OCI-LY7 (cell line): ENCODE measurements at regions of chr22 and their contacts with region 1.

Region 1: DNA sequence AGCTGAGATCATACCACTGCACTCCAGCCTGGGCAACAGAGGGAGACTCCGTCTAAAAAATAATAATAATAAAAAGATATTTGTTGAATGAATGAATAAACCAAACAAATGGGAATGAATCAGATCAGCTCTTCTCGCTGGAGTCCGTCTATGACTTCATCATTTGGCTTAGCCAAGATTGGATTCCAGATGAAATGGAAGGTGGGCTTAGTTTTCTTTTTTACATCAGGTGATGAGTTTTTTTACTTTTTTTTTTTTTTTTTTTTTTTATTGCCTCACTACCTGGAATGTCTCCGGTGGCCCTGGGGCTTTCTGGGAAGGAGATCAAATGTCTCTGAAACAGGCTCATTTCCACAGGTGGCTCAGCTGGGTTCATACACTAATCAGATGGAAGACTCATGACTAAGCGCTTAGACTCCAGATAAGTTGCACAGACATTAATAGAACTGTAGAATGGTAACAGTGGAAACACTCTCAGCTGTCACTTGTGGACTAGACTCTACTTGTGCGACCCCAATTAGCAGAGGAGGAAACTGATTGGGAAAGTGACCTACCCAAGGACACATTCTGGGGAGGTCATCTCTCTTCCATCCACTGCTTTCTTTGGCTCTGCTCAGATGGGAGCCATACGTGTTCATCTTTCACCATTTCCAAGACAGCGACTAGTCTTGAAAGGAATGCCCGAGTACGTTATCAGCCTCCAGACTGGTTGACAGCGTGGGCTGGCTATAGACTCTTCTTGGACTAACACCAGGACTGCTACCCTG is 20.5 kb upstream of the RBFOX2 start:
- DNase-seq: no peak
- H3K4me3 ChIP-seq: no peak overlapping the region
- H3K27ac ChIP-seq: no peak overlapping the region
- H3K4me1 ChIP-seq: peaks cover 7% of the 10 kb centered on the region
- CTCF ChIP-seq: no peak

Region 2: DNA sequence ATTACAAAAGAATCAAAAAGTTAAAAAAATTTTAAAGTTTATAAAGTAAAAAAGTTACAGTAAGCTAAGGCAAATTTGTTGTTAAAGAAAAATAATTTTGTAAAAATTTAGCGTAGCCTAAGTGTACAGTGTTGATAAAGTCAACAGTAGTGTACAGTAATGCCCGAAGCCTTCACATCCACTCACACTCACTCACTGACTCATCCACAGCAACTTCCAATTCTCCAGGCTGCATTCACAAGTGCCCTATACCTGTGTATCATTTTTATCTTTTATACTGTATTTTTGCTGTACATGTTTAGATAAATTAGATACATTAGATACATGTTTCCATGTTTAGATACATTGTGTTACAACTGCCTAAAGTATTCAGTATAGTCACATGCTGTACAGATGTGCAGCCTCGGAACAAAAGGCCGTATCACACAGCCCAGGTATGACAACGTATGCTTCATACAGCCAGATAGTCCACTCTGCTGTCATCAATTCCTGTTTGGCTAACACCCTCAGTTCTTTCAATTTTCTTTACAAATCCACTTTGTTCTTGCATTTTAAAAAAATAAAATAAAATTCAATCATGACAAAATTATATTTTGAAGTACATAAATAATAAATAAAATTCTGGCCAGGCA is 101.2 kb before region 1 on chr22:
- CTCF ChIA-PET with region 1: no interaction called
- POLR2A ChIA-PET with region 1: no interaction called
- intact Hi-C with region 1: loop called (anchors 5 kb)
- DNase-seq: no peak
- H3K4me3 ChIP-seq: no peak overlapping the region
- H3K27ac ChIP-seq: no peak overlapping the region
- H3K4me1 ChIP-seq: no peaks in the 10 kb centered on the region
- CTCF ChIP-seq: no peak

Region 3: DNA sequence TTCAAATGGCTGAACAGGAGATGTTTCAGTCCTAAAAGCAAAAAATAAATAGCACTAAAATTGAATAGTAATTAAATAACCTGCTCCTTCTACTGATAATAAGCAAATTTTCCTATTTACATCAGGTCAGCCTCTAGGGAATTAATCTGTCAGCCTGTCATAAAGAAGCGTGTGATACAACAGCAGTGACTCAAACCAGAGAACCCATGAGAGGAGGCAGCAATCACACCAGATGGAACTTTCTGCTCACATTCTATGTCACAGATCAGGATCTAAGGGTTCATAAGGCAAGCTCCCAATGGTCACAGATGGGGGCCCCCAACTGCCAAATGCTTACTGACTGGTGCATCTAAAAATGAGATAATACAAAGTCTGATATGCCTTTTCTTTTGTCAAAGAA is 61.6 kb before region 1 on chr22:
- CTCF ChIA-PET with region 1: no interaction called
- POLR2A ChIA-PET with region 1: no interaction called
- intact Hi-C with region 1: no loop called
- DNase-seq: no peak
- H3K4me3 ChIP-seq: no peak overlapping the region
- H3K27ac ChIP-seq: no peak overlapping the region
- H3K4me1 ChIP-seq: peaks cover 5% of the 10 kb centered on the region
- CTCF ChIP-seq: no peak